Activated CD8-positive, alpha-beta T cell treated with anti-CD3 and anti-CD28 coated beads, Interleukin-2, amount 10 ng/mL, durations not matched to agents 7 days and 5 days (primary cell): ENCODE measurements at regions of chr2 and their contacts with region 1.

Region 1: GRCh38 chr2:136423516-136423996 is 305.6 kb upstream of the CXCR4 start:
- DNase-seq: peak; percentile 90
- ATAC-seq: peak; percentile 99
- H3K4me3 Mint-ChIP-seq: peak overlapping the region; percentile 75
- H3K27ac Mint-ChIP-seq: peak overlapping the region; percentile 63
- H3K4me1 Mint-ChIP-seq: peaks cover 22% of the 10 kb centered on the region
- H3K27me3 Mint-ChIP-seq: peaks cover 42% of the 10 kb centered on the region

Region 2: DNA sequence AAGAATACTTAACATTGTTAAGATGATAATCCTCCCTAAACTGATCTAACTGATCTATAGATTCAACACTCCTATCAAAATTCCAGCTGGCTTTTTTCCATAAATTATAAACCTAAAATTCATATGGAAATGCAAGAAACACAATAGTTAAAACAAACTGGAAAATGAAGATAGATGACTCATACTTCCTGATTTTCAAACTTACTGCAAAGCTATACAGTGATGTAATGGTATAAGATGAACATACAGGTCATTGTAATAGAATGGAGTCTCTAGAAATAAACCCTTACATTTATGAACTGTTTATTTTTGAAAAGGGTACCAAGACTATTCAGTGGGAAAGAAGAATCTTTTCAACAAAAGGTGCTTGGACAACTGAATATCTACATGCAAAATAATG is 649.6 kb before region 1 on chr2:
- CTCF ChIA-PET with region 1: no interaction called
- POLR2A ChIA-PET with region 1: no interaction called
- DNase-seq: no peak
- ATAC-seq: no peak
- H3K4me3 Mint-ChIP-seq: no peak overlapping the region
- H3K27ac Mint-ChIP-seq: no peak overlapping the region
- H3K4me1 Mint-ChIP-seq: peaks cover 5% of the 10 kb centered on the region
- H3K27me3 Mint-ChIP-seq: no peaks in the 10 kb centered on the region

Region 3: GRCh38 chr2:135985018-135985825 is 438.3 kb before region 1 on chr2 and contains the start of gene DARS1:
- CTCF ChIA-PET with region 1: no interaction called
- POLR2A ChIA-PET with region 1: no interaction called
- DNase-seq: peak; percentile 89
- ATAC-seq: peak; percentile 86
- H3K4me3 Mint-ChIP-seq: peak within 1 kb of the TSS; percentile 89
- H3K27ac Mint-ChIP-seq: peak within 1 kb of the TSS; percentile 98
- H3K4me1 Mint-ChIP-seq: peaks cover 55% of the 10 kb centered on the region
- H3K27me3 Mint-ChIP-seq: no peaks in the 10 kb centered on the region
- total RNA-seq, gene DARS1: 139 to 148 TPM

Region 4: DNA sequence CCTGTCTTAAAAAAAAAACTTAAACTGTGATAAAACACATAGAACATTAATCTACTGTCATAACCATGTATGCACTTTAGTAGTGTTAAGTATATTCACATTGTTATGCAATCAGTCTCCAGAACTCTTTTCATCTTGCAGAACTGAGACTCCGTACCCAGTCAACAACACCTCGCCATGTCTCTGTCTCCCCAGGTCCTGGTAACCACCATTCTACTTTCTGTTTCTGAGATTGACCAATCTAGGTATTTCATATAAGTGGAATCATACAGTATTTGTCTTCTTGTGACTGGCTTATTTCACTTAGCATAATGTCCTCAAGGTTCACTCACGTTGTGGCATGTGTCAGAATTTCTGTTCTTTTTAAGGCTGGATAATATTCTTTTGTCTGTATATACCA is 14.8 kb before region 1 on chr2:
- CTCF ChIA-PET with region 1: interaction called, 11 read pairs
- POLR2A ChIA-PET with region 1: no interaction called
- DNase-seq: no peak
- ATAC-seq: no peak
- H3K4me3 Mint-ChIP-seq: no peak overlapping the region
- H3K27ac Mint-ChIP-seq: no peak overlapping the region
- H3K4me1 Mint-ChIP-seq: peaks cover 1% of the 10 kb centered on the region
- H3K27me3 Mint-ChIP-seq: peaks cover 33% of the 10 kb centered on the region

Region 5: DNA sequence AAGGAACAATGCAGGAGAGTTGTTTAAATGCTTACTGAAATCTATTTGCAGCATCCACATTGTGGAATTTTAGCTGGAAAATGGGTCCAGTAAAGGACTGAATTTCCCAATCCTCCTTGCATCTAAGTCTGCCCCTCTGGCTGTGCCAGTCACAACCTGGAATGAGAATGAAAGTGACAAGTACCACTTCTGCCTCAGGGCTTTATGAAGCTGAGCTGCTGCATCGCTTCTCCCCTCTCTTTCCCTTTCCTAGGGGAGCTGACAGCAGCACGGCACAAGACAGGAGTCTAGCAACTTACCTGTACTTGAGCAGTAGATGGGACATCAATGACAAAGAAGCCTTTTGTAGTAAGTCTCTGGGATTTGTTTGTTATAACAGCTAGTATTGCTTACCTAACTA is 314.5 kb after region 1 on chr2:
- CTCF ChIA-PET with region 1: interaction called, 12 read pairs
- POLR2A ChIA-PET with region 1: no interaction called
- DNase-seq: no peak
- ATAC-seq: no peak
- H3K4me3 Mint-ChIP-seq: no peak overlapping the region
- H3K27ac Mint-ChIP-seq: no peak overlapping the region
- H3K4me1 Mint-ChIP-seq: no peaks in the 10 kb centered on the region
- H3K27me3 Mint-ChIP-seq: no peaks in the 10 kb centered on the region

Region 6: GRCh38 chr2:137838255-137839092 is 1414.9 kb after region 1 on chr2:
- CTCF ChIA-PET with region 1: interaction called, 11 read pairs
- POLR2A ChIA-PET with region 1: no interaction called
- DNase-seq: no peak
- ATAC-seq: no peak
- H3K4me3 Mint-ChIP-seq: no peak overlapping the region
- H3K27ac Mint-ChIP-seq: no peak overlapping the region
- H3K4me1 Mint-ChIP-seq: no peaks in the 10 kb centered on the region
- H3K27me3 Mint-ChIP-seq: no peaks in the 10 kb centered on the region